ENCODE measurements at regions of chr2 and their contacts with region 1.

Region 1: GRCh38 chr2:101697124-101698013 is at the start of gene MAP4K4:
- DNase-seq: peak; percentile 82 to 91
- ATAC-seq: peak; percentile 80 to 90 (median 82)
- H3K4me3 ChIP-seq: peak within 1 kb of the TSS; percentile 82
- H3K27ac ChIP-seq: peak within 1 kb of the TSS; percentile 90
- H3K4me1 ChIP-seq: peaks cover 29% of the 10 kb centered on the region
- H3K27me3 ChIP-seq: no peaks in the 10 kb centered on the region
- CTCF ChIP-seq: no peak
- total RNA-seq, gene MAP4K4: 45.5 to 89.5 (median 80.7) TPM

Region 2: DNA sequence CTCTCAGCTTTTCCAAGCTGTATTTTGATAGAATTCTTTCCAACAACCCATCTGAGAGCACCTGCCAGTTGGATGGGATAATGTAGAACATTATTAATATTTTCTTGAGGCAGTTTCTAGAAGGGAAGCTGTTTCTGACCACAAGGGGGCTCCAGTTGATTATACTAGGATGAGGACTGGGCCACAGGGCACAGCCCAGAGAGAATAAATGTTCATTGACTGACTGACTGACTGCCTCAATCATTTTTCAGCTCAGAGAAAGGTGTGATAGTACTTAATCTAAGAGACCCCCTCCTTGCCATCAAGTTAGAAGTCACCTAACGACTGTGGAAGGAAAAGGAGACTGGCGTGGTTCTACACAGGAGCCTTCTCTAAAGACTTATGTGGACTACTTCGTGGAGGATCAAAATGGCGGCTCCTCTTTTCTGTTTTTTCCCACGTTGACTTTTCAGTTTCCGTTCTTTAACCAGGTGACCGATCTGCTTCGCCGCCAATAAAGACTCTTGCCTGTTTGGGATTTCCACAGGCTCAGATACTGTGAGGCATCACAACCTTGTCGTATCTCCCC is 278.2 kb before region 1 on chr2:
- intact Hi-C with region 1: loop called in 1 of 2 experiments (anchors 5 kb)
- DNase-seq: no peak
- ATAC-seq: peak; percentile 65 to 74 (median 72)
- H3K4me3 ChIP-seq: no peak overlapping the region
- H3K27ac ChIP-seq: no peak overlapping the region
- H3K4me1 ChIP-seq: no peaks in the 10 kb centered on the region
- H3K27me3 ChIP-seq: peaks cover 0 to 3% (median 0%) of the 10 kb centered on the region in 3 donors
- CTCF ChIP-seq: peak; percentile 73

Region 3: GRCh38 chr2:101558740-101559519 is 138.4 kb before region 1 on chr2:
- intact Hi-C with region 1: loop called in 1 of 2 experiments (anchors 2 kb)
- DNase-seq: no peak
- ATAC-seq: peak; percentile 88 to 95 (median 90)
- H3K4me3 ChIP-seq: peak overlapping the region; percentile 39
- H3K27ac ChIP-seq: peak overlapping the region; percentile 90
- H3K4me1 ChIP-seq: peaks cover 7% of the 10 kb centered on the region
- H3K27me3 ChIP-seq: no peaks in the 10 kb centered on the region
- CTCF ChIP-seq: no peak

Region 4: DNA sequence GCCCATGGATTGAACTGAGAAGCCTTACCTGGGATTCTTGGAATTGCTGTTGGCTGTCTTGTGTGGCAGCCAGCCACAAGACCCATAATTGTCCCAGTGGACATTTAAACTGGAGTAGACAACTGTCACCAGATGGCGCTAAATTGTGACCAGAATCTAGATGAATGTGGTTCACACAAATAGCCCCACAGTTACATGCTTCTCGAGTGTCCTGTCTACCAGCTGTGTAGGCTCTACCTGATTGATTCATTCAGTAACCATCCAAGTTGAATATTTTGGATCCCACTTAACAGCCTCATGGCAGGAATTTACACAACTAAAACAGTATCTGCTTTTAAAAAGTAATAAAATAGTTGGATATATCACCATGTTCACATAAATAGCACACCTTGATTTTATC is 73.4 kb after region 1 on chr2:
- intact Hi-C with region 1: loop called in 1 of 2 experiments (anchors 10 kb)
- DNase-seq: no peak
- ATAC-seq: peak; percentile 64 to 84 (median 74)
- H3K4me3 ChIP-seq: no peak overlapping the region
- H3K27ac ChIP-seq: no peak overlapping the region
- H3K4me1 ChIP-seq: peaks cover 71% of the 10 kb centered on the region
- H3K27me3 ChIP-seq: no peaks in the 10 kb centered on the region
- CTCF ChIP-seq: peak; percentile 32

Region 5: GRCh38 chr2:101831351-101831865 is 134.0 kb after region 1 on chr2:
- intact Hi-C with region 1: loop called in 1 of 2 experiments (anchors 5 kb)
- DNase-seq: peak; percentile 62 to 76
- ATAC-seq: peak; percentile 88 to 96 (median 91)
- H3K4me3 ChIP-seq: no peak overlapping the region
- H3K27ac ChIP-seq: no peak overlapping the region
- H3K4me1 ChIP-seq: peaks cover 17% of the 10 kb centered on the region
- H3K27me3 ChIP-seq: no peaks in the 10 kb centered on the region
- CTCF ChIP-seq: peak; percentile 84

Measured in psoas muscle (tissue), 8 donors.